Heart left ventricle (tissue), 16 donors: ENCODE measurements at regions of chrX and their contacts with region 1.

Region 1: DNA sequence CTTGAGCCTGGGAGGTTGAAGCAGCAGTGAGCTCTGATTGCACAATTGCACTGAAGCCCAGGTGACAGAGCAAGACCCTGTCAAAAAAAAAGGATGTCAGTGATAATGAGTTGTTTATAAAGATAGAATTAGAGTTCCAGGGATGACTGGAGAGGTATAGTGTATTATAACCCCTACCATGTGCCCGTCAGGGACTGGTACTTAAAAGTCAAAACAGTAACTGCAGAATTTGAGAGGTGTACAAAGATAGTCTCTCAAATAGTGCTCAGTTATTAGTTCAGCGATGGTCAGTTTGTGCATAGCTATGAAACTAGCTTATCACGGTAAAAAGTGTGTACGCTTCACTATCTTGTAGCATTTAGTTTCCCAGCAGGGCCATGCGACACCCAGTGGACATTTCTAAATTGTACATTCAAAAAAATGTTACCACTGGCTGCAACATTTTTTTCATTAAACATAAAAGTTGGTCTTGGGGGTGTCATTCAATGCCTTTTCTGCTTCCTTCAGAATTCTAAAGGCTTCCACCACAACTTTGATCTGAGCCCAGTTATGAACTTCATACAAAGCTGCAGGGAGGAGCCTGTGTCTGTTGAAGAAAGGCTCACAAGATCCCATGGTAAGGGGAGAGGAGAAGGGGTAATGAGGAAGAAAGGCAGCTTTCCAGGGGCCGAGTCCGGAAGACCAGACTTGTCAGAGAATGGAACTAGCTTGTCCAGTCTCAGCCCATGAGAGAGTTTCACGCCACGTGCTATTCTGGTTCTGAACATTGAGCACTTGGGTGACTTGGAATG is 9.2 kb upstream of the GYG2 start:
- DNase-seq: no peak
- ATAC-seq: no peak
- H3K4me3 ChIP-seq: no peak overlapping the region
- H3K27ac ChIP-seq: no peak overlapping the region
- H3K4me1 ChIP-seq: no peaks in the 10 kb centered on the region
- H3K27me3 ChIP-seq: peaks cover 0 to 6% (median 0%) of the 10 kb centered on the region in 9 donors
- CTCF ChIP-seq: peak; percentile 13 to 54 (median 40)
- POLR2A ChIP-seq: no peak

Region 2: GRCh38 chrX:1657367-1658070 is 1162.0 kb before region 1 on chrX:
- intact Hi-C with region 1: loop called in 1 of 10 experiments (anchors 10 kb)
- DNase-seq: peak in 2 of 5 donors; percentile 13 to 26
- ATAC-seq: peak in 3 of 4 donors; percentile 53 to 85 (median 55)
- H3K4me3 ChIP-seq: peak overlapping the region in 3 of 12 donors; percentile 2 to 51 (median 19)
- H3K27ac ChIP-seq: peak overlapping the region in 1 of 12 donors; percentile 49
- H3K4me1 ChIP-seq: peaks cover 0 to 12% (median 6%) of the 10 kb centered on the region in 12 donors
- H3K27me3 ChIP-seq: peaks cover 0 to 3% (median 0%) of the 10 kb centered on the region in 9 donors
- CTCF ChIP-seq: no peak
- POLR2A ChIP-seq: no peak

Region 3: DNA sequence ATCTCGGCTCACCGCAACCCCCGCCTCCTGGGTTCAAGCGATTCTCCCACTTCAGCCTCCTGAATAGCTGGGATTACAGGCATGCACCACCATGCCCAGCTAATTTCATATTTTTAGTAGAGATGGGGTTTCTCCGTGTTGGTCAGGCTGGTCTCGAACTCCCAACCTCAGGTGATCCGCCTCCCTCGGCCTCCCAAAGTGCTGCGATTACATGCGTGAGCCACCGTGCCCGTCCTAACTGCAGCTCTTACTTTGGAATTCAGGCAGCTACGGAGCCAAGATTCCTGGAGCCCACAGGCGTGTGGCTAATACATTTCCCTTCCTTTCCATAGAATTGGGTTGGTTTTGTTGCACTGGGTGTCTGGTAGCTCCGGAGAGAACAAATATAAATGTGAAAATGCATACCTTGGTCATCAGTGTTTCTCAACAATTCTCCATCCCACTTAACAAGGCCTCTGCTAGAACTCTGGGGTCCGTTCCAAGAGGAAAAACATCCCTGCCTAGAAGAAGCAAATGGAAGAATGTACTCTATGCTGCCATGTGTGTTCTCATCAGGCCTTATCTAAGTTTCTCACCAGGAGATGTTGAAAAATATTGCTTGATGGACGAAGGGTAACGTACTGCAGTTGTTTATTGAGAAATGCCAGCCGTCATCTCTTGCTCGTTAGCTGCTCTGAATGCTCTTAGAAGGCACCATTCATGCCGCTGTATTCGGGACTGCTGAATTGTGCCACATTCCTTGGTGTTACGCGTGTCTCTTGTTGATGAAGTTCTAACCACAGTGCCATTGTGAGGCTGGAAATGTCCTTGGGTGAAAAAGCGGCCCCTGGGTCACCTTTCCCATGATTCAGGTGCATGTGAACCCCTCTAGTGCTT is 179.0 kb before region 1 on chrX:
- intact Hi-C with region 1: loop called in 7 of 10 experiments (anchors 2 to 10 kb)
- DNase-seq: no peak
- ATAC-seq: no peak
- H3K4me3 ChIP-seq: no peak overlapping the region
- H3K27ac ChIP-seq: no peak overlapping the region
- H3K4me1 ChIP-seq: no peaks in the 10 kb centered on the region
- H3K27me3 ChIP-seq: no peaks in the 10 kb centered on the region
- CTCF ChIP-seq: no peak
- POLR2A ChIP-seq: no peak

Region 4: GRCh38 chrX:2647627-2648026 is 171.9 kb before region 1 on chrX:
- intact Hi-C with region 1: loop called in 7 of 10 experiments (anchors 2 to 10 kb)
- DNase-seq: no peak
- ATAC-seq: no peak
- H3K4me3 ChIP-seq: no peak overlapping the region
- H3K27ac ChIP-seq: no peak overlapping the region
- H3K4me1 ChIP-seq: no peaks in the 10 kb centered on the region
- H3K27me3 ChIP-seq: no peaks in the 10 kb centered on the region
- CTCF ChIP-seq: no peak
- POLR2A ChIP-seq: no peak

Region 5: GRCh38 chrX:3548765-3549391 is 729.3 kb after region 1 on chrX:
- intact Hi-C with region 1: no loop called
- DNase-seq: peak in 2 of 5 donors; percentile 18 to 24
- ATAC-seq: peak in 2 of 4 donors; percentile 61 to 62
- H3K4me3 ChIP-seq: peak overlapping the region in 9 of 12 donors; percentile 15 to 53 (median 32)
- H3K27ac ChIP-seq: peak overlapping the region in 5 of 12 donors; percentile 24 to 57 (median 34)
- H3K4me1 ChIP-seq: peaks cover 0 to 11% (median 0%) of the 10 kb centered on the region in 12 donors
- H3K27me3 ChIP-seq: no peaks in the 10 kb centered on the region
- CTCF ChIP-seq: peak in 10 of 12 donors; percentile 28 to 51 (median 43)
- POLR2A ChIP-seq: no peak